ENCODE measurements at regions of chr4 and their contacts with region 1.

Region 1: DNA sequence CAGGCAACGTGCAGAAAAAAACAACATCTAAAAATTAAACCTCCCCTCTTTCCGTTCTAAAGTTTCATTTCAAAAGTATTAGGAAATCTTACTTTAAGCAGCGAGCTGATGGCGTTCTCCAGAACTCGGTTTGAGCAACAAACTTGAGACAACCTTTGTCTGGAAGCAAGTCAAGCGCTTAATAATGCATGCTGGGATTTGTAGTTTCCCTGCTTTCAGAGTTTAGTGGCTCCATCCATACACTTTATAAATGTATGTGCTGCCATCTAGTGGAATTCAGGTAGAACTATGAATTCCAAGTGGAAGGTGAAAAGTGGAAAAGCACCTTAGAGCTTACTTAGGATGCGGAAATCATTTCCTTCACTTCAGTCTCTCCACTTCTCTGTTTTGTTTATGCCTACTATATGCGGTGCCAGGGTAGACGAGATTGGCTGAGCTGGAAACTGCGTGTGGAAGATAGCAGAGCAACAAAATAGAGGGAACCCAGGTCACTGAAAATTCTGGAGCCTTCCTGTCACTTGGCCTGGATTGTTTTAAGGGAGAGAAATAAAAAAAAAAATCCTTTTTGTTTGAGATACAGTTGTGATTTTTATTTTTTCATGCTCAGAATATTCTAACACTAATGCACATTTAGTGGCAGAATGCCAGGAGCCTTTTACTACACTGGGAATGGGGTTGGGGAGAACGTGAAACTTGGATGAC is at the start of gene BDH2:
- DNase-seq: peak in 1 of 2 donors; percentile 74
- H3K4me3 ChIP-seq: peak within 1 kb of the TSS; percentile 7
- CTCF ChIP-seq: peak in 1 of 3 donors; percentile 20
- POLR2A ChIP-seq: no peak
- total RNA-seq, gene BDH2: 29.9 to 44.5 (median 38.9) TPM

Region 2: DNA sequence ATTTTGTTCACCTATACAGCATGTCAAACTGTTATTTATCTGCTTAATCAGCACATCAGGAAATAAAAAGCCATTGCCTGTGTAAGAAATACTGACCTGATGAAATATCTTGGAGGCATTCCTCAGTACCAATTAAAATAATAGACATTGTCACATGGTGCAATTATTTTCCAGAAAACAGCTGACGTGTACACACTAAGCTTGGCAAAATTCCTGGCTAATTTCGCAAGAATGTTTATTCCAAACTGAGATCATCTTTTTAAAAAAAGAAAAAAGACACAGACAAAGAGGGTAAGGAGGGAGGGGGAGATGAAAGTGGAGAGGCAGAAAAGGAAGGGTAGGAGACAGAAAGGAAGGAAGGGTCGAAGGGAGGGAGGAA is 660.6 kb before region 1 on chr4:
- intact Hi-C with region 1: loop called (anchors 10 kb)
- DNase-seq: peak in 1 of 2 donors; percentile 61
- H3K4me3 ChIP-seq: no peak overlapping the region
- CTCF ChIP-seq: no peak
- POLR2A ChIP-seq: no peak

Region 3: DNA sequence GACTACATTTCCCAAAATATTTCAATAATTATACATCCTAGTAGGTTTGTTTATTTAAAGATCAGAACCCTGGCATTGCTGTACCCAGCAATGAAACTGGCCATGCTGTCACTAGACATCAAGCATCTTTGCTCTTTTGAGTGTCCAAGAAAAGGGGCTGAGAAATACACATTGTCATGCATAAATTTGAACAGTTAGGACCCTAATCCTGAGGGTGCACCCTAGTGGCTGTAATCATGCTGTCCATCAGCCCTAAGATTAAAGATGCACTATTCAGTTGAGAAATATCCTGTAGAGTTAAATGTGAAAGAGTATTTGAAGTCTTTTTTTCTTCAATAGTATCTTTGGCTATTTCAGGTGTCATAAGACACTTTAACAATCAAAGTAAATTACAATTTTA is 489.8 kb before region 1 on chr4:
- intact Hi-C with region 1: loop called (anchors 10 kb)
- DNase-seq: no peak
- H3K4me3 ChIP-seq: no peak overlapping the region
- CTCF ChIP-seq: no peak
- POLR2A ChIP-seq: no peak

Region 4: GRCh38 chr4:103019308-103020124 is 80.3 kb before region 1 on chr4 and contains the start of gene SLC9B1:
- intact Hi-C with region 1: loop called (anchors 10 kb)
- DNase-seq: peak; percentile 95 to 99
- H3K4me3 ChIP-seq: peak within 1 kb of the TSS; percentile 28
- CTCF ChIP-seq: no peak
- POLR2A ChIP-seq: peak in 1 of 2 donors; percentile 44
- total RNA-seq, gene SLC9B1: 0.30 to 1.4 (median 0.51) TPM